HCT116 (cell line): ENCODE measurements at regions of chr16 and their contacts with region 1.

Region 1: GRCh38 chr16:106623-107324 is 28.7 kb downstream of the MPG start:
- DNase-seq: peak; percentile 34
- ATAC-seq: peak; percentile 82
- H3K4me3 ChIP-seq: no peak overlapping the region
- H3K27ac ChIP-seq: no peak overlapping the region
- H3K4me1 ChIP-seq: peaks cover 0 to 9% of the 10 kb centered on the region in 2 experiments; a peak in 3 of 4 replicates
- H3K27me3 ChIP-seq: no peaks in the 10 kb centered on the region
- CTCF ChIP-seq: peak; percentile 48 to 60 (median 48); a peak in 5 of 6 replicates
- POLR2A ChIP-seq: no peak
- RAD21 ChIP-seq: peak; percentile 62

Region 2: GRCh38 chr16:65671-66137 is 41.1 kb before region 1 on chr16:
- CTCF ChIA-PET with region 1: interaction called, 11 read pairs
- POLR2A ChIA-PET with region 1: no interaction called
- RAD21 ChIA-PET with region 1: no interaction called
- intact Hi-C with region 1: no loop called
- DNase-seq: peak; percentile 21
- ATAC-seq: peak; percentile 92
- H3K4me3 ChIP-seq: no peak overlapping the region
- H3K27ac ChIP-seq: no peak overlapping the region
- H3K4me1 ChIP-seq: peaks cover 3 to 12% of the 10 kb centered on the region in 2 experiments; a peak in 3 of 4 replicates
- H3K27me3 ChIP-seq: no peaks in the 10 kb centered on the region
- CTCF ChIP-seq: peak; percentile 74 to 95 (median 76)
- POLR2A ChIP-seq: no peak
- RAD21 ChIP-seq: peak; percentile 93

Region 3: GRCh38 chr16:180938-181667 is 74.3 kb after region 1 on chr16:
- CTCF ChIA-PET with region 1: interaction called, 4 read pairs
- POLR2A ChIA-PET with region 1: no interaction called
- RAD21 ChIA-PET with region 1: no interaction called
- intact Hi-C with region 1: loop called (anchors 1 kb)
- DNase-seq: peak; percentile 12
- ATAC-seq: peak; percentile 72
- H3K4me3 ChIP-seq: no peak overlapping the region
- H3K27ac ChIP-seq: no peak overlapping the region
- H3K4me1 ChIP-seq: peaks cover 0 to 5% of the 10 kb centered on the region in 2 experiments; a peak in 1 of 4 replicates
- H3K27me3 ChIP-seq: no peaks in the 10 kb centered on the region
- CTCF ChIP-seq: peak; percentile 51 to 70 (median 68)
- POLR2A ChIP-seq: no peak
- RAD21 ChIP-seq: peak; percentile 74

Region 4: DNA sequence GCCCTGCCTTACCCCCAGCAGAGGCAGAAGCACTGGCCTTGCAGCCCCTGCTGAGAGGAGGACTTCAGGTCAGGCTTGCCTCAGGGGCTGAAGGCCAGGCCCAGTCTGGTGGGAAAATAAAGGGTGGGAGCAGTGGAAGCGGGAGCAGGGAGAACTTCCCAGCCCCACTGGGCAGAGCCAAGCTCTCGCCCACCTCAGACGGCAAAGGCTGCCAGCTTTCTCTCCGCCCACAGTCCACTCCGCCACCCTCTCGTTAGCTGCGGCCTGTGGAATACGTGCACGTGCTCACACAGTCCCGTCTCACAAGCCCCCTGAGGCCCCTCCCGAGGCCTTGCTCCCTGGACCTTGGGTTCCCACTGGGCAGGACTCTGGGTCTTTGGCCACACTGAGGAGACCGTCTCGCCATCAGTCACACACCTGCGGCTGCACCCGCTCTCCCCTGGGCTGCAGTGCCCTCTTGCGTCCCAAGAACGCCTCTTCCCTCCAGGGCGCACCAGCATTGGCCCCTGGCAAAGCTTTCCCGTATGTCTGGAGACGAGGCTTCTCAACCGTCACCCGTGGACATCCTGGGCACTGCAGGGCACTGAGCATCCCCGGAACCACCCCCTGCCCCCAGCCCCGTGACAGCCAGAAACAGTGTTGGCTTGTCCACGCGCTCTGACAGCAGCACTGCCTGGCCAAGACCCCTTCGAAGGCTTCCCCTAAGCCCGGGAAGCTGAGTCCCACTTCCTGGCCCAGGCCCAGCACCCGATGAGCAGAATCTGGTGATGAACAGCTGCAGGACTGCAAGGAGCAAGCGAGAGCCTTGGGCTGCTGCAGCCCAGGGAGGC is 255.3 kb after region 1 on chr16:
- CTCF ChIA-PET with region 1: interaction called, 21 read pairs
- POLR2A ChIA-PET with region 1: no interaction called
- RAD21 ChIA-PET with region 1: interaction called, 3 to 4 read pairs
- intact Hi-C with region 1: loop called (anchors 1 kb)
- DNase-seq: peak; percentile 43
- ATAC-seq: peak; percentile 94
- H3K4me3 ChIP-seq: no peak overlapping the region
- H3K27ac ChIP-seq: peak overlapping the region; percentile 22; the same call in 1 of the 2 replicates
- H3K4me1 ChIP-seq: no peaks in the 10 kb centered on the region
- H3K27me3 ChIP-seq: no peaks in the 10 kb centered on the region
- CTCF ChIP-seq: peak; percentile 64 to 73 (median 64); a peak in 5 of 6 replicates
- POLR2A ChIP-seq: no peak
- RAD21 ChIP-seq: peak; percentile 93